Activated CD4-positive, alpha-beta T cell treated with anti-CD3 and anti-CD28 coated beads, Interleukin-2, amount 10 ng/mL, durations not matched to agents 24 days and 14 days (primary cell): ENCODE measurements at regions of chr9 and their contacts with region 1.

Region 1: DNA sequence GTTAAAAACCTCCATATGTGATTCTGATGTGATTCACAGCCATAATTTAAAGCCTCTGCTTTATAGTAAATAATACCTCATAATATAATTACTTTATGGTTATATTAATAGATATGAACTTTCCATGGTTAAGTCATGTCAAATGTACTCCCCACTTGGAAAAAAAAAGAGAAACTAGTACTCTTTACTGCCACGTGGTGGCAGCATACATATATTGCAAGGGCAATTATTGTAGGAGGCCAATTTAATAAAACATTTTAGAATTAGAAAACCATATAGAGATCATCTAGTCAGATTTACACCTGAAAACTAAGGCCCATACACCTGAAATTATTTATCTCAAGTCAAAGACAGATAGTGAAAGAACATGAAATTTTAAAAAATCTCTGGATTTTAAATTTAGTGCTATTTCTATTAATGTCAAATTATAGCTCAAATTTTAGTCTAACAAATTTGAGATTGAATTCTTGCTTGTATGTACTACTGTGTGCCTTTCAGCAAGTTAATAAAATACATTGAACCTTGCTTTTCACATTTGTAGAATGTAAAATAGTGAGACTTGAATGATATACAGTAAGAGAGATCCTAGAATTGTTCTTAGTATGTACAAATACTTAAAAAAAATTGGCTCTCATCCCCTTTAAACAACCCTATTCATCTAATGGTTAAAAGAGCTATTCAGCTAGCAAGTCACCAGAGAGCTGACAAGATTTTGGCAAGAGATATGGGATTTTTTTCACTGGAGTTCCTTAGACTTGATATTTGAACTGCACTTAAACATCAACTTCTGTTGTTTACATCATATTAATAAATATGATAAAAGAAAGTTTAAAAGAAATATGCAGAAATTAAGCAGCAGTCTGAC is 603.8 kb downstream of the TLE4 start:
- DNase-seq: peak; percentile 60
- H3K4me3 Mint-ChIP-seq: no peak overlapping the region
- H3K27ac Mint-ChIP-seq: no peak overlapping the region
- H3K4me1 Mint-ChIP-seq: no peaks in the 10 kb centered on the region
- H3K27me3 Mint-ChIP-seq: no peaks in the 10 kb centered on the region

Region 2: GRCh38 chr9:79129865-79130480 is 1045.5 kb before region 1 on chr9:
- intact Hi-C with region 1: loop called (anchors 10 kb)
- DNase-seq: peak; percentile 60
- H3K4me3 Mint-ChIP-seq: no peak overlapping the region
- H3K27ac Mint-ChIP-seq: no peak overlapping the region
- H3K4me1 Mint-ChIP-seq: no peaks in the 10 kb centered on the region
- H3K27me3 Mint-ChIP-seq: no peaks in the 10 kb centered on the region

Region 3: GRCh38 chr9:79477955-79478771 is 697.4 kb before region 1 on chr9:
- intact Hi-C with region 1: loop called (anchors 10 kb)
- DNase-seq: peak; percentile 59
- H3K4me3 Mint-ChIP-seq: no peak overlapping the region
- H3K27ac Mint-ChIP-seq: no peak overlapping the region
- H3K4me1 Mint-ChIP-seq: peaks cover 1% of the 10 kb centered on the region
- H3K27me3 Mint-ChIP-seq: no peaks in the 10 kb centered on the region

Region 4: GRCh38 chr9:80107931-80108660 is 67.4 kb before region 1 on chr9:
- intact Hi-C with region 1: no loop called
- DNase-seq: no peak
- H3K4me3 Mint-ChIP-seq: no peak overlapping the region
- H3K27ac Mint-ChIP-seq: no peak overlapping the region
- H3K4me1 Mint-ChIP-seq: no peaks in the 10 kb centered on the region
- H3K27me3 Mint-ChIP-seq: no peaks in the 10 kb centered on the region